OCI-LY7 (cell line): ENCODE measurements at regions of chr17 and their contacts with region 1.

Region 1: DNA sequence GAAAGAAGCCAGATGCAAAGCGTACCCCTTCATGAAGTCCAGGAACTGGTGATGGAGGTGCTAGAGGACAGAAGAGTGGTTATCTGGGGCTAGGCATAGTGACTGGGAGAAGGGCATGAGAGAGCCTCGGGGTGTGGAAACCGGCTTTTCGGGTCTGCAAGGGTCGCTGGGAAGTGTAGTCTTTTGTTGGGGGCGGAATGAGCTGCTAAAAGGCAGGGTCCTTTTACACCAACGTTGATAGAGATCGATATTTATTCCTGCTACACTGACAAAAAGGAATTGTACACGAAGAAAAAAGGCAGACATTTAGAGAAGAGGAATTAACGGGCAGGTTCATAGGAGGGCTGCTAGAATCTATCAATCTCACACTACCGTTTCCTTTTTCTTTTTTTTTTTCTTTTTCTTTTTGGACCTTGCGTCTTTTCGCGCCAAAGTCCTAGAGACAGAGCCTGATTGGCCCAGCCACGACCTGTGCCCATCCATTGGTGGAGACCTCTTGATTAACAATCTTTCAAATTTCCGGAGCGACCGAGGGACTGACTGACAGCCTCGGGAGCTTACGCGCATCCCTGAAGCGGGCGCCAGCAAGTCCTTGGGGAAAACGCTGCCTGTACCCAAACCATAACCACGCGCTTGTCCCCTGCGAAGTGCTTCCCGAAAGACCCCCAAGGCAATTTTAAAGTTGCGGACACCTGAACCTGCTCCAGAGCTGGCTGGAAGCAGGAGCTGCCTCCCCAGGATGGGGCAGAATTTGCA is 27.7 kb upstream of the DHRS7B start:
- DNase-seq: peak; percentile 97
- H3K4me3 ChIP-seq: peak overlapping the region; percentile 85
- H3K27ac ChIP-seq: peak overlapping the region; percentile 67
- H3K4me1 ChIP-seq: peaks cover 30% of the 10 kb centered on the region
- CTCF ChIP-seq: no peak

Region 2: GRCh38 chr17:21019976-21020586 is 79.0 kb before region 1 on chr17:
- CTCF ChIA-PET with region 1: no interaction called
- POLR2A ChIA-PET with region 1: no interaction called
- intact Hi-C with region 1: loop called (anchors 1 kb)
- DNase-seq: peak; percentile 71
- H3K4me3 ChIP-seq: no peak overlapping the region
- H3K27ac ChIP-seq: peak overlapping the region; percentile 1
- H3K4me1 ChIP-seq: peaks cover 5% of the 10 kb centered on the region
- CTCF ChIP-seq: peak; percentile 80

Region 3: GRCh38 chr17:21043286-21044232 is 55.6 kb before region 1 on chr17:
- CTCF ChIA-PET with region 1: interaction called, 4 read pairs
- POLR2A ChIA-PET with region 1: interaction called, 23 read pairs
- intact Hi-C with region 1: loop called (anchors 1 kb)
- DNase-seq: peak; percentile 39
- H3K4me3 ChIP-seq: peak overlapping the region; percentile 66
- H3K27ac ChIP-seq: peak overlapping the region; percentile 86
- H3K4me1 ChIP-seq: peaks cover 30% of the 10 kb centered on the region
- CTCF ChIP-seq: peak; percentile 94

Region 4: DNA sequence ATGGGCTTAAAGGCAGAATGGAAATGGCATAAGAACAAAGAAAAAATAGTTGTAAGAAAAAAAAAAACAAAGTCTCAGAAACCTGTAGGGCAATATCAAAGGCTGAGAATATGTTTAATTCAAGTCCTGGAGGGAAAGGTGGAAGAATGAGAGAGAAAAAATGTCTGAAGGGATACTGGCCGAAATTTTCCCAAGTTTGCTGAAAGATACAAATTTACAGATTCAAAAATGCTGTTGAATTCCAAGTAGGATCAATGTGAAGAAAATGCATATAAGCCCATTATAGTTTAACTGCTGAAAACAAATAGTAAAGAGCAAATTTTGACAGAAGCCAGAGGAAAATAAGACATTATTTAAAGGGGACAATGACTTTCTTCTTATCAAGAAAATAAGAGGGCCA is 49.7 kb before region 1 on chr17:
- CTCF ChIA-PET with region 1: interaction called, 5 read pairs
- POLR2A ChIA-PET with region 1: interaction called, 16 read pairs
- intact Hi-C with region 1: no loop called
- DNase-seq: no peak
- H3K4me3 ChIP-seq: no peak overlapping the region
- H3K27ac ChIP-seq: no peak overlapping the region
- H3K4me1 ChIP-seq: peaks cover 56% of the 10 kb centered on the region
- CTCF ChIP-seq: no peak

Region 5: GRCh38 chr17:21058098-21058893 is 40.8 kb before region 1 on chr17:
- CTCF ChIA-PET with region 1: interaction called, 3 read pairs
- POLR2A ChIA-PET with region 1: interaction called, 16 read pairs
- intact Hi-C with region 1: loop called (anchors 2 kb)
- DNase-seq: peak; percentile 38
- H3K4me3 ChIP-seq: no peak overlapping the region
- H3K27ac ChIP-seq: peak overlapping the region; percentile 23
- H3K4me1 ChIP-seq: peaks cover 72% of the 10 kb centered on the region
- CTCF ChIP-seq: 0 out of 2 replicates have a peak, but pooled peaks have one; percentile 17